ENCODE measurements at regions of chr9 and their contacts with region 1.

Region 1: GRCh38 chr9:131678499-131679111 is 61.3 kb downstream of the RAPGEF1 start:
- DNase-seq: peak; percentile 79 to 93
- H3K4me3 ChIP-seq: peak overlapping the region; percentile 23; the same call in 1 of the 2 replicates
- H3K27ac ChIP-seq: peak overlapping the region; percentile 81
- H3K4me1 ChIP-seq: peaks cover 54% of the 10 kb centered on the region
- H3K27me3 ChIP-seq: no peaks in the 10 kb centered on the region
- CTCF ChIP-seq: no peak

Region 2: DNA sequence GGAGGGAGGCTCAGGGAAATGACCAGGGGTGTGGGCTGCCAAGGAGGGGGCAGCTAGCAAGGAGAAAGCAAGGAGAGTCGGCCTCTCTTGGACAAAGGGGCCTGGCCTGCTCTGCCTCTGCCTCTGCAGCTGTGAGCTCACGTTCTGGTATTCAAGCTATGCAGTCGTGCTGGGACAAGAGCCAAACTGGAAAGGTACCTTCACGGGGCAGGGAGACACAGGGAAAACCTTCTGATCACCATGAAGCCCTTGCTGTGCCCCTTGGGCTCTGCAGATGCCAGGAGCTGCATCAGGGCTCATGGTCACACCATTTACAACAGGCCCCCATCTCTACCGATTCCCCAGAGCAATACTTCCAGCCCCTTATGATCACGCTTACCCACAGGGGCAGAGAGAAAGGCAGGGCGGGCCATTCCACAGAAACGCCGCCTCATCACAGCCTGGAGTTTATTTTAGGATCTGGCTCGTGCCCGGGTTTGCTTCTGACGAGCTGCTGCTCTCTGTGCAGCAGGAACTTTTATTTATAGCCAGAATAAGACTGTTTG is 70.0 kb before region 1 on chr9:
- CTCF ChIA-PET with region 1: no interaction called
- POLR2A ChIA-PET with region 1: interaction called, 3 read pairs
- intact Hi-C with region 1: loop called (anchors 1 kb)
- DNase-seq: peak; percentile 78 to 85
- H3K4me3 ChIP-seq: peak overlapping the region; percentile 34; the same call in 1 of the 2 replicates
- H3K27ac ChIP-seq: peak overlapping the region; percentile 44; the same call in 1 of the 2 replicates
- H3K4me1 ChIP-seq: peaks cover 20% of the 10 kb centered on the region
- H3K27me3 ChIP-seq: no peaks in the 10 kb centered on the region
- CTCF ChIP-seq: no peak

Region 3: DNA sequence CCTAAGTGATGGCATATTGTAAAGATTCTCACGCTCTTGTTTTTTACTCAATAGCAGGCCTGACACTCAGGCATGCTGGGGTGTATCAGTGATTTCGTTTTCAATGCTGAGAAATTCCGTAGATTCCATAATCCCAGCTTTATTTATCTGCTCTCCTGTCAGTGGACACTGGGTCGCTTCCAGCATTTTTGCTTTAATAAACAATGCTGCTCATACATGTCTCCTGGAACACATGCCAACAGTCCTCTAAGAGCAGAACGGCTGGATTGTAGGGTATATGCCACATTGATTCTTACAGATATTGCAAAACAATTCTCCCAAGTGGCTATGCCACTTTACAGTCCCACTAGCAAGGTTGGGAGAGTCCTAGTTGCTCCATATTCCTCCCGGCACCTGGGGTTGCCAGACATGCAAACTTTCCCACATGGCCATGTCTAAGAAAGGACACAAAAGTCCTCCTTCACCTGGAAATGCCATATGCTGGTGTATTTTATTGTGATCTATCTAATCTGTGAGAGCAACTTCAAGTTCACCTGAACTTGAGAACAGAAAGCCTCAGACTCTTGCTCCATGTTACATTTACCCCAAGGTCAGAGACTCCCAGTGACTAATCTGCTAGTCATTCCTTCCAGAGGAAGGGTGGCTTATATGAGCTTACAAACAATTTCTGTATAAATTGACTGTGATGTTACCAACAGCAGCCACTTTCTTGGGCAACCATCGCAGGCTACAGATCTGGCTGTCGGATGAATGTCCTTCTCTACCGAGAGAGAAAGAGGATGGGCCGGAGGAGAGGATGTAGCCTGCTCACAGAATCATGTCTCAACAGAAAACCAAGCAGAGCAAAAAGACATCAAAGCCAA is 20.5 kb before region 1 on chr9:
- CTCF ChIA-PET with region 1: no interaction called
- POLR2A ChIA-PET with region 1: interaction called, 5 read pairs
- intact Hi-C with region 1: loop called (anchors 2 kb)
- DNase-seq: peak; percentile 50 to 96
- H3K4me3 ChIP-seq: peak overlapping the region; percentile 27; the same call in 1 of the 2 replicates
- H3K27ac ChIP-seq: peak overlapping the region; percentile 90
- H3K4me1 ChIP-seq: peaks cover 42% of the 10 kb centered on the region
- H3K27me3 ChIP-seq: no peaks in the 10 kb centered on the region
- CTCF ChIP-seq: no peak

Region 4: DNA sequence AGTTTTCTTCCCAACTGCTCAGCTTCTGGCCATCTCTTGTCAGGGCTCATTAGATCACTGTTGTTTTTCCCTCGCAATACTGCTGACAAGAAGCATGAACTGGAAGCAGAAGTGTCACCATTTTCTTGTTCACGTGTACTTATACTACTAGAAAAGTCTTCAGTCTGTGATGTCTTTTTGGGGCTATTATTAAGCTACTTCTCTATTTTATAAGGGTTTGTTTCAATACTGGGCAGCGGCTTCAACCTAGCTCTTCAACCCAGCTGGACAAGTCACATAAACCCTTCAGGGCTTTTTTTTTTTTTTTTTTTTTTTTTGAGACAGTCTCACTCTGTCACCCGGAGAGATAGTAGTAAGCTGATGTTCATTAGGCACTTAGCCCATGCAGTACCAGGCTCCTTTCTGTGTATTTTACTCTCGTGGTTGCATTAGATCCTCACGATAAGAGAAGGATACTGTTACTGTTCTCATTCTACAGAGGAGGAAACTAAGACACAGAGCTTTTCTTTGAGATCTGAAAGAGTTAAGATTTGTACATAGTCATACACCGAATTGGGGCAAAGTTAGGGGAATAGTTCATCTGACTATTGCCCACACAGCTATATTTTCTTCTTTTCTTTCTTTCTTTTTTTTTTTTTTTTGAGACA is 40.8 kb after region 1 on chr9:
- CTCF ChIA-PET with region 1: no interaction called
- POLR2A ChIA-PET with region 1: interaction called, 10 read pairs
- intact Hi-C with region 1: no loop called
- DNase-seq: no peak
- H3K4me3 ChIP-seq: no peak overlapping the region
- H3K27ac ChIP-seq: no peak overlapping the region
- H3K4me1 ChIP-seq: no peaks in the 10 kb centered on the region
- H3K27me3 ChIP-seq: no peaks in the 10 kb centered on the region
- CTCF ChIP-seq: no peak

Region 5: GRCh38 chr9:131858147-131858546 is 179.5 kb after region 1 on chr9:
- CTCF ChIA-PET with region 1: no interaction called
- POLR2A ChIA-PET with region 1: no interaction called
- intact Hi-C with region 1: no loop called
- DNase-seq: no peak
- H3K4me3 ChIP-seq: no peak overlapping the region
- H3K27ac ChIP-seq: no peak overlapping the region
- H3K4me1 ChIP-seq: no peaks in the 10 kb centered on the region
- H3K27me3 ChIP-seq: no peaks in the 10 kb centered on the region
- CTCF ChIP-seq: no peak

Region 6: DNA sequence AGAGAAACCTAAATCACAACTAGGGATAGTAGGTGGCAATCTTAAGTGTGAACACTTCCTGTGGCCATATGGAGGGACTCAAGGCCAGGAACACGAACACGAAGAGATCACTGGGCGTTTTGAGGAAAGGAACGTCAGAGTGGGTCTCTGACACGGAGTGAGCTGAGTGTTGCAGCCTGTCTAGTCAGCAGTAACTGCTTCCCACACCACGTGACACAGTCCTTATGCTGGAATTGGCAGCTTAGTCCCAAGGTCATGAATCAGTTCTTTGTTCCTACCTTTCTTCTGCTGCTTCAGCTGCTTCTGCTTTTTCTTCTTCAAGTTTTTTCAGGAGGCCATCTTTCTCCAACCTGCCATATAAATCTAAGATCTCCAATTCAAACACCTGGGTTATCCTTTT is 1218.3 kb after region 1 on chr9:
- CTCF ChIA-PET with region 1: interaction called, 12 read pairs
- POLR2A ChIA-PET with region 1: no interaction called
- intact Hi-C with region 1: no loop called
- DNase-seq: no peak
- H3K4me3 ChIP-seq: no peak overlapping the region
- H3K27ac ChIP-seq: no peak overlapping the region
- H3K4me1 ChIP-seq: peaks cover 19% of the 10 kb centered on the region
- H3K27me3 ChIP-seq: no peaks in the 10 kb centered on the region
- CTCF ChIP-seq: no peak